GM12878 (cell line): ENCODE measurements at regions of chr13 and their contacts with region 1.

Region 1: GRCh38 chr13:21133077-21133476 is 43.3 kb downstream of the SKA3 start:
- DNase-seq: no peak
- ATAC-seq: no peak
- H3K4me3 ChIP-seq: no peak overlapping the region
- H3K27ac ChIP-seq: no peak overlapping the region
- H3K4me1 ChIP-seq: no peaks in the 10 kb centered on the region
- H3K27me3 ChIP-seq: no peaks in the 10 kb centered on the region
- CTCF ChIP-seq: no peak
- EP300 ChIP-seq: no peak
- POLR2A ChIP-seq: no peak
- RAD21 ChIP-seq: no peak

Region 2: GRCh38 chr13:20940083-20940880 is 192.8 kb before region 1 on chr13:
- CTCF ChIA-PET with region 1: interaction called, 12 read pairs
- POLR2A ChIA-PET with region 1: no interaction called
- RAD21 ChIA-PET with region 1: interaction called, 3 read pairs
- SMC1A ChIA-PET with region 1: interaction called, 7 read pairs
- in situ Hi-C with region 1: no loop called
- intact Hi-C with region 1: loop called (anchors 2 kb)
- DNase-seq: no peak
- ATAC-seq: no peak
- H3K4me3 ChIP-seq: no peak overlapping the region
- H3K27ac ChIP-seq: no peak overlapping the region
- H3K4me1 ChIP-seq: no peaks in the 10 kb centered on the region
- H3K27me3 ChIP-seq: no peaks in the 10 kb centered on the region
- CTCF ChIP-seq: no peak
- EP300 ChIP-seq: no peak
- POLR2A ChIP-seq: no peak
- RAD21 ChIP-seq: no peak

Region 3: GRCh38 chr13:21060987-21061763 is 71.9 kb before region 1 on chr13 and contains the start of gene LATS2:
- CTCF ChIA-PET with region 1: no interaction called
- POLR2A ChIA-PET with region 1: no interaction called
- RAD21 ChIA-PET with region 1: no interaction called
- SMC1A ChIA-PET with region 1: no interaction called
- in situ Hi-C with region 1: no loop called
- intact Hi-C with region 1: no loop called
- DNase-seq: peak; percentile 33
- ATAC-seq: peak; percentile 96
- H3K4me3 ChIP-seq: peak within 1 kb of the TSS; percentile 81
- H3K27ac ChIP-seq: peak within 1 kb of the TSS; percentile 54; the same call in 1 of the 2 replicates
- H3K4me1 ChIP-seq: peaks cover 4% of the 10 kb centered on the region
- H3K27me3 ChIP-seq: no peaks in the 10 kb centered on the region
- CTCF ChIP-seq: peak in 1 of 3 experiments; percentile 28; a peak in 1 of 6 replicates
- EP300 ChIP-seq: no peak; a peak in 1 of 4 replicates
- POLR2A ChIP-seq: peak; percentile 69
- RAD21 ChIP-seq: 0 out of 2 replicates have a peak, but pooled peaks have one; percentile 19
- polyA plus RNA-seq, gene LATS2: 0.90 to 1.1 TPM